GM10248 (cell line): ENCODE measurements at regions of chr1 and their contacts with region 1.

Region 1: GRCh38 chr1:41416552-41417334 is 55.5 kb downstream of the FOXO6 start:
- DNase-seq: peak; percentile 84
- CTCF ChIP-seq: peak; percentile 98

Region 2: GRCh38 chr1:41268154-41268770 is 148.5 kb before region 1 on chr1:
- CTCF ChIA-PET with region 1: interaction called, 18 read pairs
- POLR2A ChIA-PET with region 1: no interaction called
- DNase-seq: peak; percentile 83
- CTCF ChIP-seq: peak; percentile 95

Region 3: GRCh38 chr1:41305576-41306363 is 111.0 kb before region 1 on chr1:
- CTCF ChIA-PET with region 1: interaction called, 13 read pairs
- POLR2A ChIA-PET with region 1: no interaction called
- DNase-seq: no peak
- CTCF ChIP-seq: no peak

Region 4: GRCh38 chr1:41313661-41314131 is 103.0 kb before region 1 on chr1:
- CTCF ChIA-PET with region 1: interaction called, 21 read pairs
- POLR2A ChIA-PET with region 1: no interaction called
- DNase-seq: peak; percentile 44
- CTCF ChIP-seq: peak; percentile 50

Region 5: DNA sequence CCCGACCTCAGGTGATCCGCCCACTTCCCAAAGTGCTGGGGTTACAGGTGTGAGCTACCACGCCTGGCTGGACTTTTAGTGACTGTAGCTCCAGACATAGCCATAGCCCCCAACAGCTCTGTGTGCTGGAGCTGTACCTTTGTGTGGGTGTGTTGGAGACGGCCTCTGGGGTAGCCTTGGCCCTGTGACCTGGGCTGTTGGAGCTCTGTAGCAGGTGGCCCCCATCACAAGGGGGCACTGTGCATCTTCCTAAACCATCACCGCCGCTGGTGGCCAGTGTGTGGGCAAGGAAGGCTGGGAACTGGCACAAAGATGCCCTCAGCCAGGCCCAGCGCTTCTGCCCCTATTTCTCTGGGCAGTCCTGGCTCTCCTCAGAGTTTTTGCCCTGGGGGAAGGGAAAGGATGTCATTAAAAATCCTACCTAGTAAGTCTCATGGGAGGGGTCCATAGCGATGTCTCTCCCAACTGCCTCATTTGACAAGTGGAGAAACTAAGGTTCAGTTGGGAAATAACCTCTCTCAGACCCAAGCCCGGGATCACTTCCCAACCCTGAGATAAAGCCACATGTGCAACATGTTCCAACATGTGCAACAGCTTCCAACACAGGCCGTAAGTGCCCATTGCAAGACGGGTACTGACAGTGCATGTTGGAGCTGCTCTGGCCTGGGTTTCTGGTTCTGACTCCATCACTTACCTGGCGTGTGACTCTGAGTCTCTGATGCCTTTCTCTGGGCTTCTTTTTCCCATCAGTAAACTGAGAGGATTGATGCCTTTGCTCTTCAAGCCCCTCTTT is 93.7 kb before region 1 on chr1:
- CTCF ChIA-PET with region 1: interaction called, 144 read pairs
- POLR2A ChIA-PET with region 1: no interaction called
- DNase-seq: peak; percentile 75
- CTCF ChIP-seq: peak; percentile 64

Region 6: DNA sequence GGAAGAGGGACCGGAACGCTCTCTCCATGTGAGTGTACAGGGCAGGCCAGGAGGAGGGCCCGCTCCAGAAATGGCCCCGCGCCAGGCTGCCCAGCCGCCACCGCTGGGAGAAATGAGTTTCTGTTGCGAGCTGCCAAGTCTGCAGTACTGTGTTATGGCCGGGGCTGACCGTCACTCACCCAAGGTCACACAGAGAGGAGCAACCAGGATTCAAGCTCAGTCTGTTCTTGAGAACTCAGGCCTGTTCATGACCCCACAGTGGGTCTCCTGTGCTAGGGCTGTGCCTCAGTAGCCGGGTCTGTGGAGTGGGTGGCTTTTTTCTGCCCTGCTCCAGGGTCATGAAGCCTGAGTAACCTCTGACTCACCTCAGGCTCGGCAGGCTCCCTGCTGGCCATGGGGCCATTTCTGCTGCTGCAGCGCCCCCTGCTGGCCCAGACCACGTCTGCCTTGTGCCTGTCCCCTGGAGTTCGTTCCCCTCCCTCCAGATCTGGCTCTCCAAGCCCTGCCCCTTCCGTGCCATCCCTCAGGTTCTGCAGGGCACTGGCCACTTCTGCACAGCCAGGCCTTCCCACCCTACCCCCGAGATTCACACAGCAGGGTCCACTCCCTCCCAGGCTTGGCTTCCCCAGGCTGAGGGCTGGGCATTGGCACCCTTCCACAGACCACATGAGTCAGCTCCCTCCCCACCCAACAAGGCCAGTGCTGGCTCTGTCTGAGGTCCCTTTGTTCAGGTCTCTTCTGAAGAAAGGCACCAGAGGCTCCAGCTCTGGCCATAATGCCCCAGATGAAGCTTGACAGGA is 15.9 kb after region 1 on chr1:
- CTCF ChIA-PET with region 1: interaction called, 72 read pairs
- POLR2A ChIA-PET with region 1: no interaction called
- DNase-seq: peak; percentile 88
- CTCF ChIP-seq: peak; percentile 90